Prostate gland (tissue), 2 donors: ENCODE measurements at regions of chr11 and their contacts with region 1.

Region 1: GRCh38 chr11:1652771-1653540 is 23.4 kb downstream of the KRTAP5-5 start:
- DNase-seq: peak; percentile 54
- H3K4me3 ChIP-seq: no peak overlapping the region
- H3K27ac ChIP-seq: no peak overlapping the region
- H3K4me1 ChIP-seq: no peaks in the 10 kb centered on the region
- H3K27me3 ChIP-seq: no peaks in the 10 kb centered on the region
- CTCF ChIP-seq: peak; percentile 96 to 98 (median 97)
- POLR2A ChIP-seq: no peak

Region 2: DNA sequence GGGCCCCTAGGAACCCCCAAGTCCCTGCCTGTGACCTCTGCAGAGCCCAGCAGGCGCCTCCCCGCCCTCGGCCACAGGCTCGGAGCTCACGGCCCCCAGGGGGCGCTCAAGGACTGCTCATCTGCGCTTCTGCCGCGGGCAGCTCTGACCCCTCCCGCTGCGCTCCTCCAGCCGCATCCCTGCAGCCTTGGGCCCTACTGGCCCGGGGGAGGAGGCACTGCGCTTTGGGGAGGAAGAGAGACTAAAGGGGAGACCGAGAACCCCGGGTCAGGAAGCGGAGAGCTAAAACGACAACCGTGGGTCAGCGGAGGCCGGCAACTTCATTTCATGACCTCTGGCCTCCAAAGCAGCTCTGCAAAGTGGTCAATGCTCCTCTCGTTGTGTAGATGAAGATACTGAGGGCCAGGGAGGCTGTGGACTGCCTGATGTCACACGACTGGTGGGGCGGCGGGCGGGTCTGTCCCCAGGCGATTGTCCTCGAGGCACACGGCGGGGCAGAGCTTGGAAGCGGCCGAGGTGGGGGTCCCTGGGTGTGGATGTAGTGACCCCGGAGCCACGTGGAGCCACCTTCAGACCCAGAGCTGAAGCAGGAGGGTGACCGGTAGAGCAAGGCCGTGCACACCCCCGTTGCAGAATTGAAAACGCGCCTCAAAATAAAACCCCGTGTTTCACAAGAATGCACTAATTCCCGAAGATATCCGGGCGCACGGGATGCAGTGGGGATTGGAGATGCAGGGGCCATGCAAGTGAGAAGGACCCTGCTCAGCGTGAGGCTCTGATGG is 41.3 kb after region 1 on chr11:
- intact Hi-C with region 1: loop called (anchors 5 kb)
- DNase-seq: peak; percentile 72
- H3K4me3 ChIP-seq: peak overlapping the region in 1 of 2 donors; percentile 26
- H3K27ac ChIP-seq: no peak overlapping the region
- H3K4me1 ChIP-seq: peaks cover 7% of the 10 kb centered on the region
- H3K27me3 ChIP-seq: no peaks in the 10 kb centered on the region
- CTCF ChIP-seq: peak; percentile 87 to 96 (median 92)
- POLR2A ChIP-seq: no peak

Region 3: DNA sequence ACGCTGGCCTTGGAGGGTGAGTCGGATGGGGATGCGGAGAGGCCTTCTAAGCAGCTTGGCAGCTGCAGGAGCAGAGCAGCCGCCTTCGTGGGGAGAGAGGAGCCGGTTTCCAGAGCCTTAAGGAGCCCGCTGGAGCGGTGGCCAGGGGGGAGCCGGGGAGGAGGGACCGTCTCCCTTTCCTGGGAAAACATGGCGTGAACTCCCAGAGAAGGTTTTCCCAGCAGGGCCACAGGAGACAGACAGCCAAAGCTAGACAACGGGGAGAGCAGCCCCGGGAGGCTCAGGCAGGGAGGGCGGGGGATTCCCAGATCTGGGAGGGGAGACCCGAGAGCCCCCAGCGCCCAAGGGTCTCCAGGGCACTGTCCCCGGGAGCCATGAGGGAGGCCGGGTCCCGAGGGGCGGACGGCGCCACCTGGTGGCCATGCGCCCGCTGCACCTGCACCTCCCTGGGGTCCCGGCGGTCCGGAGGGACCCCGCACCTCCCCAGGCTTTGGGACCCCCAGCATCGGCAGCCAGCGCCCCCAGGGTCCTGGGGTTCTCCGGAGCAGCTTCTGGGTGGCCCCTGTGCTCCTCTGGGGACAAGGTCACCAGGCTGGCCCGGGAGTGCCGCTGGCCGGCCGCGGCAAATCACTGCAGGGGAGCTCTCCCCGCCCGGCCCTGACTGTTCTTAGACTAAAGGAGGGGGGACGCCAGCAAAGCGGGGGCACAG is 179.4 kb after region 1 on chr11:
- intact Hi-C with region 1: loop called (anchors 1 kb)
- DNase-seq: no peak
- H3K4me3 ChIP-seq: no peak overlapping the region
- H3K27ac ChIP-seq: no peak overlapping the region
- H3K4me1 ChIP-seq: peaks cover 8% of the 10 kb centered on the region
- H3K27me3 ChIP-seq: peaks cover 5% of the 10 kb centered on the region
- CTCF ChIP-seq: peak; percentile 93 to 97 (median 96)
- POLR2A ChIP-seq: no peak